ENCODE measurements at regions of chr22 and their contacts with region 1.

Region 1: DNA sequence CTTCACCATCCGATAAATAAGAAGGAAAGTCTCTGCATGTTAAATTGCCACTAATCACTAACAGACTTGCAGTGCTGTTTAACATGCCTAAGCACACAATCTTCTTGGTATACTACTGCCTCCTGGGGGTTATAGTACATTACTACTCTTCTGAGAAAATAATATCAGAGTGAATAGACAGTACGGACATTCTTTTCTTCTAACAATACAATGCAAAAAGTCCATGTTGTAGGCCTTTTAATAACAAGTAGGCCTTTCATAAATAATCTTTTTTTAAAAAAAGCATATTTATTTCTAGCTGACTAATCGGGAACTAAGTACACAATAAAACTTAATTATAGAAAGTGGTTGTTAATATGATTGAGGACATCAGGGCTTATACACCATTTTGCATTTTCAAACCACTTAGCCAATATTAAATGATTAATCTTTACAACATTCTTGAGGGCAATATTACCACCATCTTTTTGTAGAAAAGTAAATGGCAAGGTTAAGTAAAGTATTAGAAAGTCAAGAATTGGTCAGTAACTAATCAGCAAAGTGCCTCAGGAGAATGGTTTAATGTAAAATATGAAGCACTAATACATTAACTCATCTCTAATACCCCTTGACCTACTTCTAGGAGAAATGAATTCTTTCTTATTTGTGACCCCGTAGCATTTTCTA is 84.7 kb downstream of the TTC28 start:
- DNase-seq: no peak
- ATAC-seq: peak; percentile 65
- H3K4me3 Mint-ChIP-seq: no peak overlapping the region
- H3K27ac Mint-ChIP-seq: no peak overlapping the region
- H3K4me1 Mint-ChIP-seq: no peaks in the 10 kb centered on the region
- H3K27me3 Mint-ChIP-seq: peaks cover 6% of the 10 kb centered on the region

Region 2: DNA sequence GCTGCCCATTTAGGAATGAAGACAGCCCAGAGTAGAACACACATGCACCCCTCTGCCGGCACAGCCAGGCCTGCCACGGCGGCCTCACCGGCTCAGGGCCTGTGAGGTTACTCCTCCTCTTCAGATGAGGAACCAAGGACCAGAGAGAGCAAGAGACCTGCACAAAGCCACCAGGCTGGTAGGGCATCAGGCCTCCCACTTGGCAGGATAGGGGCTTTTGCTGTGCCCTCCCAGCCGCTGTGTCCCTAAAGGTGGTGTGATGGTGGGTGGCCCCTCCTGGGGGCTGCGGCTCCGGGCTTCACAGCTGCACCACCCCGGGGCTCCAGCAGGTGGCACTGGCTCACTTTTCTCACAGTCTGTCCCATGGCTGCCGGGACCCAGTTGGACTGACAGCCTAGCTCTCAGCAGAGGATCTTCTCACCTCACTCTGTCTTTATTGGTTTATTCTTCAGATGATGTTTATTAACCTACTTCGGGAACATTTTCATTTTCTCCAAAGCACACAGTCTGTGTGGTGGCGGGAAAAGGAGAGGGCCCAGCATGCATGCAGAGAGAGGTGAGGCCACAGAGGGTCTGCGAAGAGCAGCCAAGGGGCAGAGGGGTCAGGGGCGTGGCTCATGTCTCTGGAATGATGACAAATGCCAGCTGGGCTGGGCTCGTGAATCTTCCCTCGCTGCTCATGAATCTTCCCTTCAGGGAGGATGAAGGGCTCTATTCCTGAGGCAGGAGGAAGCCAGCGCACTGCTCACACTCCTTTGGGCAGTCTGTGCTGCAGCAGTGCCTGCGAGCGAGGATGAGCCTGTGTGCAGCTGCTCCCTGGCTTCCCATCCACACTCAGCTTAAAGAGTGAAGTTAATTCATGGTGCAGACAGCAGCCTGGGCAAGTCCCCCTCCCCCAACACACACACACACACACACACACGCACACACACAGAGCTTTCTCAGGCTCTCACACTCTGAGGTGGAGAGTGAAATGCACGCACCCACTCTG is 574.8 kb before region 1 on chr22:
- CTCF ChIA-PET with region 1: interaction called, 13 read pairs
- POLR2A ChIA-PET with region 1: no interaction called
- intact Hi-C with region 1: loop called (anchors 1 kb)
- DNase-seq: peak; percentile 81
- ATAC-seq: peak; percentile 87
- H3K4me3 Mint-ChIP-seq: no peak overlapping the region
- H3K27ac Mint-ChIP-seq: no peak overlapping the region
- H3K4me1 Mint-ChIP-seq: no peaks in the 10 kb centered on the region
- H3K27me3 Mint-ChIP-seq: no peaks in the 10 kb centered on the region

Region 3: DNA sequence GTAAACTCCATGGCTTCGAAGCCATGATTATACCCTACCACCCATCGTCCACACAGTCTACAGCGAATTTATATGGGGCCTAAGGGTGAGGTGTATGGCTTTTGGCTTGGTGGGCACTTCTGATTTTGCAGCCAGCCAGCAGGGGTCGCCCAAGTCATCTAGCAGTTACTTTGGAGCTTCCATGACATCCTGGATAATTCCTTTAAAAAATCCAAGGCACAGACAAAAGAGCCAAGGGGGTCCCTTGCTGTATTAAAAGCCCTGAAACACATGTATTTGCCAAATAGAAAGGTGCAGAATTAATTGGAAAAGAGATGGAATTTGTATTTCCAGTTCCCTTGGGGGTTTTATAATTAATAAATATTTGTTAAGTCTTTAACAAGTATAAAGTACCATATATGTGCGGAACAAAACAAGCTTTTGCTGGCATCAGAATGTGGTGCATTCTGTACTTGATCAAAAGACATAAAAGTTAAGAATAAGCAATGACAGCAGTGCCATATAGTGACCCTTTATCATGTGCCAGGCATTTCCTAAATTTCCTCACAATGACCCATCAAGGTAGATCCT is 543.1 kb before region 1 on chr22:
- CTCF ChIA-PET with region 1: interaction called, 5 read pairs
- POLR2A ChIA-PET with region 1: no interaction called
- intact Hi-C with region 1: loop called (anchors 1 kb)
- DNase-seq: peak; percentile 65
- ATAC-seq: no peak
- H3K4me3 Mint-ChIP-seq: no peak overlapping the region
- H3K27ac Mint-ChIP-seq: no peak overlapping the region
- H3K4me1 Mint-ChIP-seq: no peaks in the 10 kb centered on the region
- H3K27me3 Mint-ChIP-seq: no peaks in the 10 kb centered on the region

Region 4: DNA sequence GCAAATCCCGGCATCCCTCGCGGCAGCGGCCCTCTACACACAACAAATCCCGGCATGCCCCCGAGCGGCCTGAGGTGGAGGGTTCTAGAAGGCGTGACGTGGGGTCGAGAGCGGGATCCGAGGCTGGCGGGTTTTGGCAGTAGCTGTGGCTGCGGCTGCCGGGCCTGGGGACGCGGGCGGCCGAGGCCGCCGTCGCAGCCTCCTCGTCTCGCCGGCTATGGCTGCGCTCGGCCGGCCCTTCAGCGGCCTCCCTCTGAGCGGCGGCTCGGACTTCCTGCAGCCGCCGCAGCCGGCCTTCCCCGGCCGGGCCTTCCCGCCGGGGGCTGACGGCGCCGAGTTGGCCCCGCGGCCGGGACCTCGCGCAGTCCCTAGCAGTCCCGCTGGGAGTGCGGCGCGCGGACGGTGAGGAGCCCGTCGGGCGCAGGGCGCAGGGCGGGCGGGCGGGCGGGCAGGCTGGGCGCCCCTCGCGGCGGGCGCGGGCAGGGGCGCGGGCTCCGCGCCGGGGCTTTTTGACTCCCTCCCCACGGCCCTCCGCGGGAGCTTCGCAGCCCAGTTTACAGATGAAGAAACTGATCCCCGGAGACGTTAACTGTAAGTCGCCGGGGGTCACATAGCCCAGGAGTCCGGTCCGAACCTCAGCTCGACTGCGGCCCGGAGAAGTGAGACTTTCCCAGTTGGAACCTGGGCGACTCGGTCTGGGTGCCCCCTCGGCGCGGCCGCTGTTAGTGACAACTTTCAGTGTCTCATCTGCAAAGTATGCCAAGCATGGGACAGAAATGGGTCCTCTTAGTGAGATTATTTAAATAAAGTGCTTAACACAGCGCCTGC is 177.9 kb after region 1 on chr22 and contains the start of gene CCDC117:
- CTCF ChIA-PET with region 1: no interaction called
- POLR2A ChIA-PET with region 1: no interaction called
- intact Hi-C with region 1: no loop called
- DNase-seq: peak; percentile 96
- ATAC-seq: peak; percentile 91
- H3K4me3 Mint-ChIP-seq: peak within 1 kb of the TSS; percentile 94
- H3K27ac Mint-ChIP-seq: peak within 1 kb of the TSS; percentile 99
- H3K4me1 Mint-ChIP-seq: peaks cover 19% of the 10 kb centered on the region
- H3K27me3 Mint-ChIP-seq: no peaks in the 10 kb centered on the region
- total RNA-seq, gene CCDC117: 36.1 to 36.8 TPM